Astrocyte of the cerebellum (primary cell): ENCODE measurements at regions of chr15 and their contacts with region 1.

Region 1: DNA sequence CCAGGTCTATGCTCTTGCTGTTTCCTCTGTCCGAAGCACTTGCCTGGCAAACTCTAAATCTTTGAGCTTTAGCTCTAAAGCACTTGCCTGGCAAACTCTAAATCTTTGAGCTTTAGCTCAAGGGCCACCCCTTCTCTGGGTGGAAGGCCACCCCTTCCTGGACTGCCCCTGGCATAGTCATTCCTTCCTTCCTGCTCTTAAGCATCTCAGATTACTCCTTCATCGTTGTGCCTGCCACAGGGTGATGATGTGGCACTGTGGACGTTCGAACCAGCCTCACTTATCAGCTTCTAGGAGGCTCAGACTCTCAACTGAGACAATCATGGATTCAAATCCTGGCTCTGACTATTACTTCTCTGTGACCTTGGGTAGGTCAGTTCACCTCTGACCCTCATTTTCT is 10.5 kb upstream of the CRABP1 start:
- DNase-seq: no peak
- H3K4me3 ChIP-seq: no peak overlapping the region
- CTCF ChIP-seq: no peak

Region 2: GRCh38 chr15:78382114-78382880 is 52.7 kb after region 1 on chr15:
- in situ Hi-C with region 1: no loop called
- DNase-seq: no peak
- H3K4me3 ChIP-seq: no peak overlapping the region
- CTCF ChIP-seq: no peak

Region 3: GRCh38 chr15:78405336-78405924 is 75.8 kb after region 1 on chr15:
- in situ Hi-C with region 1: loop called (anchors 5 kb)
- DNase-seq: no peak
- H3K4me3 ChIP-seq: no peak overlapping the region
- CTCF ChIP-seq: no peak